Breast epithelium (tissue), 4 donors: ENCODE measurements at regions of chr2 and their contacts with region 1.

Region 1: DNA sequence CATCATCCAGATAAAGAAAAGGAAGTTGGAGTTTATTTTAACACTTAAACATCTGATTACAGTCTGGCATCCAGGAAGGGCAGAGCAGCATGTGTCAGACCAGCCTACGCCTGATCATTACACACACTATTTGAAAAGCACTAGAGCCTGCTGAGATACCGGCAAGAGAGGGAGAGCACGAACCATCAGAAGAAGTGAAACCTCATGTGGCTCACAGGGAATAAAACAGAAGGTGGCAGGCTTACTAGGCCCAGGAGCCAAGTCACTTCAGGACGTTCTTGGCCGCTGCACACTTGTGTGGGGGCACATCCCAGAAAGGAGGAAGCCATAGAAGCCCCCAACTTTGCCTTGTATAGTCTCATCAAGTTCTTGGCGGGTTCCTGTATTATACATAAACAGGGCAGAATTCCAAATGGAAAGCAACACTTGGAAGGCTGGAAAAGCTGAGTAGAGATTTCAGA is 105.5 kb downstream of the UGGT1 start:
- DNase-seq: no peak
- H3K4me3 ChIP-seq: no peak overlapping the region
- H3K27ac ChIP-seq: no peak overlapping the region
- H3K4me1 ChIP-seq: no peaks in the 10 kb centered on the region
- H3K27me3 ChIP-seq: no peaks in the 10 kb centered on the region
- CTCF ChIP-seq: no peak
- POLR2A ChIP-seq: no peak

Region 2: DNA sequence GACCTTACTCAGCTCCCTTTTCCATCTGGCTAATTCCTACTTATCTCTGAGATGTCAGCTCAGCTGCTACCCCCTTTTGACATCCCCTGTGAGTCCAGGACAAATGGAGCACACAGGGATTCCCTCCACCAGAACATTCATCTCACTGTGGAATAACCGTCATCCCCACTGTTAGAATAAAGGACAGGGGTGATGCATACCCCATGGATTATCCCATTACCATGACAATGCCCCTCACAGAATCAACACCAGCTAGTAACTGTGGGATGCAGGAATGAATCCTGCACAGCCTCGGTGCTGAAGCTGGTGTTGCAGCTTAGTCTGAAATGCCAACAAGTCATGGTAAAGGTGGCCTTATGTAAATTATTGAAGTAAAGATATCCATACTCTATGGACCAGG is 1158.1 kb after region 1 on chr2:
- intact Hi-C with region 1: loop called (anchors 5 kb)
- DNase-seq: no peak
- H3K4me3 ChIP-seq: no peak overlapping the region
- H3K27ac ChIP-seq: no peak overlapping the region
- H3K4me1 ChIP-seq: no peaks in the 10 kb centered on the region
- H3K27me3 ChIP-seq: no peaks in the 10 kb centered on the region
- CTCF ChIP-seq: no peak
- POLR2A ChIP-seq: no peak